Heart right ventricle (tissue), 16 donors: ENCODE measurements at regions of chr1 and their contacts with region 1.

Region 1: GRCh38 chr1:156154317-156154749 is 948 bp downstream of the SEMA4A start:
- DNase-seq: peak in 1 of 2 donors; percentile 22
- ATAC-seq: peak in 7 of 8 donors; percentile 7 to 71 (median 39)
- H3K4me3 ChIP-seq: peak overlapping the region in 2 of 10 donors; percentile 7 to 52
- H3K27ac ChIP-seq: peak overlapping the region in 1 of 10 donors; percentile 88
- H3K4me1 ChIP-seq: peaks cover 0 to 55% (median 0%) of the 10 kb centered on the region in 9 donors
- H3K27me3 ChIP-seq: peaks cover 0 to 25% (median 20%) of the 10 kb centered on the region in 7 donors
- CTCF ChIP-seq: no peak

Region 2: GRCh38 chr1:156204686-156205085 is 50.4 kb after region 1 on chr1:
- intact Hi-C with region 1: loop called in 2 of 10 experiments (anchors 5 kb)
- DNase-seq: no peak
- ATAC-seq: no peak
- H3K4me3 ChIP-seq: no peak overlapping the region
- H3K27ac ChIP-seq: peak overlapping the region in 3 of 10 donors; percentile 2 to 67 (median 33)
- H3K4me1 ChIP-seq: peaks cover 0 to 39% (median 29%) of the 10 kb centered on the region in 9 donors
- H3K27me3 ChIP-seq: no peaks in the 10 kb centered on the region
- CTCF ChIP-seq: no peak

Region 3: GRCh38 chr1:156276966-156277381 is 122.6 kb after region 1 on chr1:
- intact Hi-C with region 1: no loop called
- DNase-seq: no peak
- ATAC-seq: peak in 1 of 8 donors; percentile 8
- H3K4me3 ChIP-seq: no peak overlapping the region
- H3K27ac ChIP-seq: peak overlapping the region in 1 of 10 donors; percentile 72
- H3K4me1 ChIP-seq: peaks cover 0 to 58% (median 21%) of the 10 kb centered on the region in 9 donors
- H3K27me3 ChIP-seq: no peaks in the 10 kb centered on the region
- CTCF ChIP-seq: no peak